CD8-positive, alpha-beta T cell (primary cell): ENCODE measurements at regions of chr5 and their contacts with region 1.

Region 1: DNA sequence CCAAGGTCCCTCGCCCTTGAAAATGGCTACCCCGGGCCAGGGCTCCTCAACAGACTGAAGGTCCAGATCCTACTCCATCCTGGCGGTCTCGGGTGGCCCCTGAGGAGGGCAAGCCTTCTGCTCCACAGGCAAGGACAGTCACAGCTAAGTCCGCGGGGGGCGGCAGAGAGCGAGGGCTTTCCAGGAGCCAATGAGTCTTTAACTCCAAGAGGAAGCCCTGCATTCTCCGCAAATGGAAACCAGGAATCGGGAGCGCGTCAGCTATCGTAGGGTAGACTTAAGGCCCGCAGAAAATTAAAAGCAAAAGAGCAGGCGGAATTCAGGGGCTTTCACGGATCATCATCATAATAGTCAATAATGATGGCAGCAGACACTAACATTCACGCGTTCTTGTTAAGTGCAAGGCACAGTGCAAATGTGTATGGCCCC is 87.8 kb upstream of the TNFAIP8 start:
- DNase-seq: peak; percentile 39 to 95 (median 81)
- ATAC-seq: peak; percentile 76
- H3K4me3 ChIP-seq: peak overlapping the region; percentile 93 to 96
- H3K4me3 Mint-ChIP-seq: peak overlapping the region; percentile 100
- H3K27ac ChIP-seq: peak overlapping the region; percentile 79 to 89
- H3K27ac Mint-ChIP-seq: peak overlapping the region; percentile 99
- H3K4me1 ChIP-seq: peaks cover 45% of the 10 kb centered on the region
- H3K4me1 Mint-ChIP-seq: peaks cover 75% of the 10 kb centered on the region
- H3K27me3 ChIP-seq: no peaks in the 10 kb centered on the region
- H3K27me3 Mint-ChIP-seq: no peaks in the 10 kb centered on the region
- CTCF ChIP-seq: peak; percentile 79

Region 2: DNA sequence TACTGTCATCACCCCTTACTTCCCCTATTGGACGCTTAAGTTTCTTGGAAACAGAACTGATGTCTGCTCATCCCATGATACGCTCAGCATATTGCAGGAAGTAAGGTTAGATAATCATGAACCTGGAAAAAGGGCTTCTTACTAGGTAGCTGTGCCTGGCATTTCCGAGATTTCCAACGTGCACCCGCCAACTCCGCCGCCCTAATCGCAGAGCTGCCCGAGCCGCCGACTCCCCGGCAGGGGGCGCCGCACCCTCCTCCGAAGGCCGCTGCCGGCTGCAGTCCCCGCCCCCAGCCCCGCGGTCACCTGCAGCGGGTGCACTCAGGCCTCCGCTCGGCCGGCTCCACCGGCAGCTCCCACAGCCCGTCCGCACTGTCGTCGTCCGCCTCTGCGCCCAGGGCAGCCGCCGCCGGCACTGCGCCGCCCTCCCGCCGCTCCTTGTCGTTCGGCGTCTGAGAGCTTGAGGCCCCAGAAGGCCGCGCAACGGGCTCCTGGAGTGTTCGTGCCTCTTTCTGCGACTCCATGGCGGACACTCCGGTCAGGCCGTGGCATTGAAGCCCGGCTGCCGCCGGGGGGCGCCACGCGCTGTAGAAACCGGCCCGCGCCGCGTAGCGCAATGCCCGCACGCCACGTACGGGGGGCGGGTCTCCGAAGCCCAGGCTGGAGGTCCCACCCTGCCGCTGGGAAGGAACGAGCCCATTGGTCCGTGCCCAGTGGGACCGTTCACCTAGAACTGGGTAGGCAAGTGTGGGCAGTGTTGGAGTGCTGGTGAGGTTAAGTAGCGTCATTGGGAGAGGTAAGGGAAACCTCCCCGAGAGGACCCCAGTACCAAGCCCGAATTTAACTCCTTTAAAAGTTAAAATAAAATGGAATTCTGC is 279.7 kb before region 1 on chr5 and contains the start of gene DTWD2:
- CTCF ChIA-PET with region 1: interaction called, 9 read pairs
- POLR2A ChIA-PET with region 1: interaction called, 5 read pairs
- intact Hi-C with region 1: loop called in 1 of 2 experiments (anchors 1 kb)
- DNase-seq: peak; percentile 86 to 96 (median 89)
- ATAC-seq: peak; percentile 91
- H3K4me3 ChIP-seq: peak within 1 kb of the TSS; percentile 57 to 77
- H3K4me3 Mint-ChIP-seq: peak within 1 kb of the TSS; percentile 86
- H3K27ac ChIP-seq: peak within 1 kb of the TSS; percentile 55 to 66
- H3K27ac Mint-ChIP-seq: peak within 1 kb of the TSS; percentile 85
- H3K4me1 ChIP-seq: peaks cover 11% of the 10 kb centered on the region
- H3K4me1 Mint-ChIP-seq: peaks cover 16% of the 10 kb centered on the region
- H3K27me3 ChIP-seq: no peaks in the 10 kb centered on the region
- H3K27me3 Mint-ChIP-seq: no peaks in the 10 kb centered on the region
- CTCF ChIP-seq: peak; percentile 99
- total RNA-seq, gene DTWD2: 1.6 to 1.9 TPM

Region 3: DNA sequence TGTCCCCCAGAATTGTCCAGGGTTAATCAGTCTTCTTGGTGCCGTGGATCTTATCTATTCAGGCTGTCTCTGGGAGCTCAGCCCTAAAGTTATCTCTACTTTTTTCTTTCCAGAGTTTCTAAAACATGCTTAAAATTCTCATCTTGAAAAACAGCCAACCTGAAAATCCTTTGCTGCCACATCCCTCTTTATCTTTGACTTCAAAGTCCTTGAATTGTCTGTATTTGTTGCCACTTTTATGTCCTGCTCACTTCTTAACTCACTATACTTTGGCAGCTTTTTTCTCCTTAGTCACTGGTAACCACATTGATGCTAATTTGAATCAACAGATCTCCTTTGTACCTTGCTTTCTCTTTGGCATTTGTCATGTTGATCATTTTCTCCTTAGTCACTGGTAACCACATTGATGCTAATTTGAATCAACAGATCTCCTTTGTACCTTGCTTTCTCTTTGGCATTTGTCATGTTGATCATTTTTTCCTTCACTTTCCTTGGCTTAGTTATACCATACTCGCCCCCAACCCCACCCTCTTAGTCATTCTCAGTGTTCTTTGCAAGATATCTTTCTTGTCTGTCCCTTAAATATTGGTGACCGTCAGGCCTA is 188.6 kb before region 1 on chr5:
- CTCF ChIA-PET with region 1: no interaction called
- POLR2A ChIA-PET with region 1: no interaction called
- intact Hi-C with region 1: no loop called
- DNase-seq: no peak
- ATAC-seq: peak; percentile 70
- H3K4me3 ChIP-seq: no peak overlapping the region
- H3K4me3 Mint-ChIP-seq: no peak overlapping the region
- H3K27ac ChIP-seq: no peak overlapping the region
- H3K27ac Mint-ChIP-seq: no peak overlapping the region
- H3K4me1 ChIP-seq: peaks cover 9% of the 10 kb centered on the region
- H3K4me1 Mint-ChIP-seq: peaks cover 43% of the 10 kb centered on the region
- H3K27me3 ChIP-seq: no peaks in the 10 kb centered on the region
- H3K27me3 Mint-ChIP-seq: no peaks in the 10 kb centered on the region
- CTCF ChIP-seq: no peak

Region 4: GRCh38 chr5:119290161-119290569 is 22.2 kb after region 1 on chr5:
- CTCF ChIA-PET with region 1: interaction called, 11 read pairs
- POLR2A ChIA-PET with region 1: interaction called, 9 read pairs
- intact Hi-C with region 1: loop called (anchors 2 kb)
- DNase-seq: peak in 2 of 9 experiments; percentile 41 to 68
- ATAC-seq: peak; percentile 27
- H3K4me3 ChIP-seq: peak overlapping the region; percentile 9 to 10
- H3K4me3 Mint-ChIP-seq: peak overlapping the region; percentile 69
- H3K27ac ChIP-seq: peak overlapping the region; percentile 9 to 83
- H3K27ac Mint-ChIP-seq: peak overlapping the region; percentile 97
- H3K4me1 ChIP-seq: peaks cover 75% of the 10 kb centered on the region
- H3K4me1 Mint-ChIP-seq: peaks cover 86% of the 10 kb centered on the region
- H3K27me3 ChIP-seq: no peaks in the 10 kb centered on the region
- H3K27me3 Mint-ChIP-seq: no peaks in the 10 kb centered on the region
- CTCF ChIP-seq: no peak

Region 5: GRCh38 chr5:119309326-119309725 is 41.4 kb after region 1 on chr5:
- CTCF ChIA-PET with region 1: interaction called, 6 read pairs
- POLR2A ChIA-PET with region 1: interaction called, 5 read pairs
- intact Hi-C with region 1: loop called (anchors 2 kb)
- DNase-seq: peak in 1 of 9 experiments; percentile 57
- ATAC-seq: peak; percentile 25
- H3K4me3 ChIP-seq: no peak overlapping the region
- H3K4me3 Mint-ChIP-seq: peak overlapping the region; percentile 78
- H3K27ac ChIP-seq: peak overlapping the region; percentile 30 to 67
- H3K27ac Mint-ChIP-seq: peak overlapping the region; percentile 99
- H3K4me1 ChIP-seq: peaks cover 97% of the 10 kb centered on the region
- H3K4me1 Mint-ChIP-seq: peaks cover 96% of the 10 kb centered on the region
- H3K27me3 ChIP-seq: no peaks in the 10 kb centered on the region
- H3K27me3 Mint-ChIP-seq: no peaks in the 10 kb centered on the region
- CTCF ChIP-seq: no peak

Region 6: GRCh38 chr5:119328753-119329602 is 61.0 kb after region 1 on chr5:
- CTCF ChIA-PET with region 1: interaction called, 7 read pairs
- POLR2A ChIA-PET with region 1: interaction called, 6 read pairs
- intact Hi-C with region 1: loop called in 1 of 2 experiments (anchors 2 kb)
- DNase-seq: peak in 8 of 9 experiments; percentile 34 to 88 (median 74)
- ATAC-seq: peak; percentile 70
- H3K4me3 ChIP-seq: no peak overlapping the region
- H3K4me3 Mint-ChIP-seq: peak overlapping the region; percentile 47
- H3K27ac ChIP-seq: peak overlapping the region; percentile 39 to 80
- H3K27ac Mint-ChIP-seq: peak overlapping the region; percentile 95
- H3K4me1 ChIP-seq: peaks cover 95% of the 10 kb centered on the region
- H3K4me1 Mint-ChIP-seq: peaks cover 94% of the 10 kb centered on the region
- H3K27me3 ChIP-seq: no peaks in the 10 kb centered on the region
- H3K27me3 Mint-ChIP-seq: no peaks in the 10 kb centered on the region
- CTCF ChIP-seq: no peak

Region 7: GRCh38 chr5:119378075-119378700 is 110.2 kb after region 1 on chr5:
- CTCF ChIA-PET with region 1: interaction called, 10 read pairs
- POLR2A ChIA-PET with region 1: no interaction called
- intact Hi-C with region 1: no loop called
- DNase-seq: no peak
- ATAC-seq: no peak
- H3K4me3 ChIP-seq: no peak overlapping the region
- H3K4me3 Mint-ChIP-seq: no peak overlapping the region
- H3K27ac ChIP-seq: no peak overlapping the region
- H3K27ac Mint-ChIP-seq: peak overlapping the region; percentile 77
- H3K4me1 ChIP-seq: peaks cover 35% of the 10 kb centered on the region
- H3K4me1 Mint-ChIP-seq: peaks cover 69% of the 10 kb centered on the region
- H3K27me3 ChIP-seq: no peaks in the 10 kb centered on the region
- H3K27me3 Mint-ChIP-seq: no peaks in the 10 kb centered on the region
- CTCF ChIP-seq: no peak